ENCODE measurements at regions of chr1 and their contacts with region 1.

Region 1: DNA sequence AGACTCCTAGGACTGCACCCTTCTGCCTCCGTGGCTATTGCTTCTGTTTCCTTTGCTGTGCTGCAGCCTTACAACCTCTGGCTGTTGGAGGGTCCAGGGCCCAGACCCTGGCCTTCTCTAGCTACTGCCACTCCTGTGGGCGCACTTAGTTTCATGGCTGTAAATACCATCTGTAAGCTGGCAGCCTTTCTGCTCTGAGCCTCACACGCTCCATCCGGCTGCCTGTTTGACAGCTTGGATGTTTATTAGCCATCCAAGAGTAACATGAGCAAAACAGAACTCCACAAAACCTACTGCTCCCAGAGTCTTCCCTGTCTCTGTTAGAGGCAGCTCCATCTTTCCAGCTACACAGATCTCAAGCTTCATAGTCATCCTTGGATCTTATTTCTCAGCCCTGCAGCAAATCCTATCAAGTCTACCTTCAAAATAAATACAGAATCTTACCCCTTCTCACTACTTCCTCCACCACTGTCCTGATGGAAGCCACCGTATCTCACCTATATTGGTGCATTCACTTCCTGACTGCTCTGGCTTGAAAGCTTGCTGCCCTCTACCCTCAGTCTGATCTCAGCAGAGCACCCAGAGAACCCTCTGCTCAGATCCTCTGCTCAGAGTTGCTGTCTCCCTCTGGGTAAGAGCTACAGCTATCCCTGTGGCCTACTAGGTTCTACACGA is 19.1 kb downstream of the SLC25A33 start:
- DNase-seq: no peak
- ATAC-seq: peak; percentile 32
- H3K4me3 ChIP-seq: no peak overlapping the region
- H3K4me3 Mint-ChIP-seq: peak overlapping the region in 9 of 10 donors; percentile 42 to 81 (median 70)
- H3K27ac ChIP-seq: peak overlapping the region; percentile 28
- H3K27ac Mint-ChIP-seq: peak overlapping the region; percentile 0 to 96 (median 81)
- H3K4me1 ChIP-seq: peaks cover 14 to 27% of the 10 kb centered on the region in 2 donors
- H3K4me1 Mint-ChIP-seq: peaks cover 22 to 46% (median 33%) of the 10 kb centered on the region in 7 donors
- H3K27me3 ChIP-seq: no peaks in the 10 kb centered on the region
- H3K27me3 Mint-ChIP-seq: no peaks in the 10 kb centered on the region

Region 2: GRCh38 chr1:9539165-9539828 is 19.1 kb before region 1 on chr1 and contains the start of gene SLC25A33:
- CTCF ChIA-PET with region 1: no interaction called
- POLR2A ChIA-PET with region 1: interaction called, 4 read pairs
- intact Hi-C with region 1: loop called in 1 of 2 experiments (anchors 2 kb)
- DNase-seq: peak; percentile 92 to 99 (median 95)
- ATAC-seq: peak; percentile 99
- H3K4me3 ChIP-seq: peak within 1 kb of the TSS; percentile 58
- H3K4me3 Mint-ChIP-seq: peak within 1 kb of the TSS; percentile 86 to 93 (median 90)
- H3K27ac ChIP-seq: peak within 1 kb of the TSS; percentile 73
- H3K27ac Mint-ChIP-seq: peak within 1 kb of the TSS; percentile 85 to 97 (median 91)
- H3K4me1 ChIP-seq: peaks cover 5 to 8% of the 10 kb centered on the region in 2 donors
- H3K4me1 Mint-ChIP-seq: peaks cover 18 to 38% (median 31%) of the 10 kb centered on the region in 7 donors
- H3K27me3 ChIP-seq: no peaks in the 10 kb centered on the region
- H3K27me3 Mint-ChIP-seq: no peaks in the 10 kb centered on the region
- total RNA-seq, gene SLC25A33: 2.5 to 5.8 (median 3.9) TPM